Left ventricle myocardium inferior (tissue), 1 donor: ENCODE measurements at regions of chr3 and their contacts with region 1.

Region 1: DNA sequence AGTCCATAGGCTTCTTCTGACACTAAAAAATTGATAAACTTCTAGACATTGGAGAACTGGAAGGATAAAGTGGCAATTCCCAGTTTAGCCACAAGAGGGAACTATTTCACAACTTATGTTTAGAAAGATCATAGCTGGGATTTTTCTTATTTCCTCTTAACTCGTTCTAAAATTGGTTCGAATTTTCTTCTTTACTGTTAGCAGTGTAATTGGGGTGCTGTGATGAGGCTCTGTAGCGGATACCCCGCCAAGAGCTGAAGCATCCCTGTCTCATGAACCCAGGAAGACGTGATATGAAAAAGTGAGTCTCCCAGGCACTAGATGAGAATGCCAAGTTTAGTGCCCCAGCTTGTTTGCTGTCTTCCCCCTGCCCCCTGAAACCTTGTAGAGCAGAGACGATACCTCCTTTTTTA is 85.1 kb downstream of the PDCD6IP start:
- DNase-seq: no peak
- H3K4me3 ChIP-seq: peak overlapping the region; percentile 46
- H3K27ac ChIP-seq: no peak overlapping the region
- H3K4me1 ChIP-seq: peaks cover 10% of the 10 kb centered on the region
- H3K27me3 ChIP-seq: no peaks in the 10 kb centered on the region
- CTCF ChIP-seq: peak; percentile 90

Region 2: DNA sequence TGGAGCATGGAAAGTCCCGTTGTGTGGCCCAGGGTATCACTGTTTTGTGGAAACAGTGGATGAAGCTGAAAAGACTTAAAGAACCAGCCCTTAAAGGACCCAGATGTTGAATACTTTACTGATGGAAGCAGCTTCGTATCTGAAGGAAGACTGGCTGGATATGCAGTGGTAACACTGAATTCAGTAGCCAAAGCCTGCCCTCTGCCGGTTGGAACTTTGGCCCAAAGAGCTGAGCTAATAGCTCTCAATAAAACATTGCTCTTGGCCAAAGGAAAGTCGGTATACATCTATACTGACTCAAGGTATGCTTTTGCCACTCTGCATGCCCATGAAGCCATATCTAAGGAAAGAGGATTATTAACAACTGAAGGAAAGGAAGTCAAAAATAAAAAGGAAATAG is 800.3 kb after region 1 on chr3:
- intact Hi-C with region 1: loop called (anchors 10 kb)
- DNase-seq: peak; percentile 61
- H3K4me3 ChIP-seq: no peak overlapping the region
- H3K27ac ChIP-seq: no peak overlapping the region
- H3K4me1 ChIP-seq: peaks cover 4% of the 10 kb centered on the region
- H3K27me3 ChIP-seq: no peaks in the 10 kb centered on the region
- CTCF ChIP-seq: peak; percentile 74